ENCODE measurements at regions of chr12 and their contacts with region 1.

Region 1: DNA sequence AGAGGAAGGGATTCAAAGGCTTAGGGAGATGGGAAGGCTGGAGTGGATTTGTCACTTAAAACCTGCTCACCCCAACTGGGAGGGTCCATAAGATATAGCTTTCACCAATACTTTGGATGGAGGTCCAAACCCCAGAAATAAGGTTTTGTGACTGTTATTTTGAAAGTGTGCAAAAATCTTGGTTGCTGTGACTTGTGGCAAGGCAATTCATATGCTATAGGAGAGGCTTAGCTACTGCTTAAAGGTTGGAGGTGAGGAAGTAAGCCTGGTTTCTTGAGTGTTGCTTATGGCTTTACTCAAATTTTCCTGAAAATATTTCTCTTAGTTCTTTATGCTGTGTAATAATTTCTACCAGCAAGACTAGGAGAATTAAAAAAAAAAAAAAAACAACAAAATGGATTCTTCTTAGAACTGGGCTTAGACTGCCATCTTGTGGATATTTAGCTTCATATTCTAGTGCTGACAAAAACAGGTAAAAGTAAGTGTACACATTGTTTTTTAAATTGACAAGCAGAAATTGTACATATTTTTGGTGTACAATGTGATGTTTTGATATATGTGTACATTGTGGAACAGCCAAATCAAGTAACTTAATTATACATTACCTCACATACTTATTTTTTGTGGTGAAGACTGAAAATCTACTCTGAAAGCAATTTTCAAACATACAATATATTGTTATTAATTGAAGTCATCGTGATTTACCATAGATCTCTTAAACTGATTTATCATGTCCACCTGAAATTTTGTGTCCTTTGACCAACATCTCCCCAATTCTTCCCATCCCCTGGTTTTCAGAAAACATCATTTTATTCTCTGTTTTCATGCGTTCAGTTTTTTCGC is 23.0 kb downstream of the PDE6H start:
- DNase-seq: peak in 1 of 2 donors; percentile 85
- ATAC-seq: peak; percentile 69 to 78 (median 76)
- H3K4me3 ChIP-seq: no peak overlapping the region
- H3K4me3 Mint-ChIP-seq: no peak overlapping the region
- H3K27ac ChIP-seq: no peak overlapping the region
- H3K27ac Mint-ChIP-seq: no peak overlapping the region
- H3K4me1 ChIP-seq: no peaks in the 10 kb centered on the region
- H3K4me1 Mint-ChIP-seq: no peaks in the 10 kb centered on the region
- H3K27me3 ChIP-seq: no peaks in the 10 kb centered on the region
- H3K27me3 Mint-ChIP-seq: peaks cover 12 to 34% of the 10 kb centered on the region in 2 donors
- CTCF ChIP-seq: peak; percentile 84

Region 2: GRCh38 chr12:14629832-14630710 is 365.7 kb before region 1 on chr12:
- intact Hi-C with region 1: loop called (anchors 2 kb)
- DNase-seq: peak; percentile 28 to 82
- ATAC-seq: peak; percentile 89 to 100 (median 92)
- H3K4me3 ChIP-seq: no peak overlapping the region
- H3K4me3 Mint-ChIP-seq: no peak overlapping the region
- H3K27ac ChIP-seq: no peak overlapping the region
- H3K27ac Mint-ChIP-seq: no peak overlapping the region
- H3K4me1 ChIP-seq: no peaks in the 10 kb centered on the region
- H3K4me1 Mint-ChIP-seq: no peaks in the 10 kb centered on the region
- H3K27me3 ChIP-seq: no peaks in the 10 kb centered on the region
- H3K27me3 Mint-ChIP-seq: peaks cover 7 to 20% of the 10 kb centered on the region in 2 donors
- CTCF ChIP-seq: peak; percentile 86

Region 3: DNA sequence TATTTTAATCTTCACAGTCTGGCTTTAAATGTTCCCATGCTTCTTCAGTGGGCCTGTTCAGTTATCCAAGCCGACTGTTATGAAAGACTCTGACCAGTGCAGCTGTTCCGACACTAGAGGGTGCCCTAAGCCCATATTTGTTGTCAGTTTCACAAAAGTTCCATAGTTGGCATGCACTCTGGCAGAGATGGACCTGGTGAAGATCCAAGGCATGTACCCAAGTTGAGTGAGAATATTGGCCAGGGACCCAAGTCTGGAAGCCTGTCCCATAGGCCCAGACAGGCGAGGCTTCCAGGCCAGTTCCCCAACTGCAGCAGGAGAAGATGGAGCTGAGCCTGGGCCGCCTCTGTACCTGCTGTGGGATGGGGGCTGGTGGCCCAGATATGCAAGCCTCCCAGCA is 272.0 kb before region 1 on chr12:
- intact Hi-C with region 1: loop called (anchors 1 kb)
- DNase-seq: peak; percentile 34 to 83
- ATAC-seq: peak; percentile 72 to 85 (median 84)
- H3K4me3 ChIP-seq: no peak overlapping the region
- H3K4me3 Mint-ChIP-seq: no peak overlapping the region
- H3K27ac ChIP-seq: no peak overlapping the region
- H3K27ac Mint-ChIP-seq: no peak overlapping the region
- H3K4me1 ChIP-seq: no peaks in the 10 kb centered on the region
- H3K4me1 Mint-ChIP-seq: peaks cover 0 to 5% of the 10 kb centered on the region in 2 donors
- H3K27me3 ChIP-seq: peaks cover 5% of the 10 kb centered on the region
- H3K27me3 Mint-ChIP-seq: peaks cover 26 to 33% of the 10 kb centered on the region in 2 donors
- CTCF ChIP-seq: peak; percentile 72

Region 4: GRCh38 chr12:14845350-14845750 is 150.5 kb before region 1 on chr12:
- intact Hi-C with region 1: loop called (anchors 1 kb)
- DNase-seq: peak in 1 of 2 donors; percentile 77
- ATAC-seq: peak; percentile 62 to 81 (median 64)
- H3K4me3 ChIP-seq: no peak overlapping the region
- H3K4me3 Mint-ChIP-seq: no peak overlapping the region
- H3K27ac ChIP-seq: no peak overlapping the region
- H3K27ac Mint-ChIP-seq: peak overlapping the region in 1 of 2 donors; percentile 11
- H3K4me1 ChIP-seq: no peaks in the 10 kb centered on the region
- H3K4me1 Mint-ChIP-seq: peaks cover 0 to 5% of the 10 kb centered on the region in 2 donors
- H3K27me3 ChIP-seq: no peaks in the 10 kb centered on the region
- H3K27me3 Mint-ChIP-seq: peaks cover 0 to 16% of the 10 kb centered on the region in 2 donors
- CTCF ChIP-seq: peak; percentile 66

Region 5: DNA sequence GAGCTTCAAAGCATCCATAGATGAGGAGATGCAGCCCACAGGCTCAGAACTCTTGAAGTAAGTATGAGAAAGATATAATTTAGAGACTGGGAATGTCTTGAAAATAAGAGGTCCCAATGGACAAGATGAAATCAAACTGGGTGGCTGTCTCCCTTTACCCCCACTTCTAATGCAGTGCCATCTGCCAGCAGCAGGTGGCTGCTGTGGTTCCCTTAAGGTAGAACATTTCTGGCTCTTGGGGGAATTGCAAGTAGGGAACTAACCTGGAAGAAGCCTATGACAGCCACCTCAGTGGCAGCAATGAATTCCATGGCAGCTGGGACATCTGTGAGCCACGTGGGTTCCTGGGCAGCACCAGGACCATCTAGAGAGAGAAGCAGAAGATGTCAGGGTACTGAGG is 58.1 kb before region 1 on chr12:
- intact Hi-C with region 1: loop called (anchors 1 kb)
- DNase-seq: peak in 1 of 2 donors; percentile 65
- ATAC-seq: peak in 2 of 3 donors; percentile 57 to 59
- H3K4me3 ChIP-seq: no peak overlapping the region
- H3K4me3 Mint-ChIP-seq: no peak overlapping the region
- H3K27ac ChIP-seq: peak overlapping the region; percentile 5
- H3K27ac Mint-ChIP-seq: peak overlapping the region; percentile 89 to 91
- H3K4me1 ChIP-seq: peaks cover 8% of the 10 kb centered on the region
- H3K4me1 Mint-ChIP-seq: peaks cover 42 to 51% of the 10 kb centered on the region in 2 donors
- H3K27me3 ChIP-seq: no peaks in the 10 kb centered on the region
- H3K27me3 Mint-ChIP-seq: no peaks in the 10 kb centered on the region
- CTCF ChIP-seq: peak; percentile 38

Region 6: DNA sequence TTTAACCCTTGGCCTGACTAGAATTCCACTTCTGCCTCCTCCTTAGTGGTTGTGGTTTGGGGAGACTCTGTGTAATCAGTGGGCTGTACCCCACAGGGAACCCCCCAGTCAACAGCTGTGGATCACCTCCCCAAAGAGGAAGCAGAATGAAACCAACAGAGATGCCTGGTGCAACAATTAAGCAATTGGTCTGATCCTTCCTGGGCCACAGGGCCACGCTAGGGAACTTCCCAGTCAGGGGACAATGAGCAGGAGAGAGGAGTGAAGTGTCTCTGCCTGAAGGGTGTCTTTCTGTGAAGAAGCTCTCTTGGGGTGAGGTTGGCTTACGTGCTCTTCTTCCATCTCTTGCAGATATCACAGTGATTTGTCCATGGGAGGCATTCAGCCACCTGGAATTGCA is 14.8 kb before region 1 on chr12:
- intact Hi-C with region 1: no loop called
- DNase-seq: no peak
- ATAC-seq: peak in 1 of 3 donors; percentile 63
- H3K4me3 ChIP-seq: no peak overlapping the region
- H3K4me3 Mint-ChIP-seq: no peak overlapping the region
- H3K27ac ChIP-seq: no peak overlapping the region
- H3K27ac Mint-ChIP-seq: no peak overlapping the region
- H3K4me1 ChIP-seq: peaks cover 4% of the 10 kb centered on the region
- H3K4me1 Mint-ChIP-seq: peaks cover 13 to 14% of the 10 kb centered on the region in 2 donors
- H3K27me3 ChIP-seq: no peaks in the 10 kb centered on the region
- H3K27me3 Mint-ChIP-seq: no peaks in the 10 kb centered on the region
- CTCF ChIP-seq: no peak

Measured in natural killer cell (primary cell).